Activated CD8-positive, alpha-beta memory T cell treated with anti-CD3 and anti-CD28 coated beads, Interleukin-2, amount 10 ng/mL, durations not matched to agents 7 days and 5 days (primary cell): ENCODE measurements at regions of chr1 and their contacts with region 1.

Region 1: GRCh38 chr1:113904674-113905434 is at the starts of genes AP4B1 and DCLRE1B:
- DNase-seq: peak; percentile 100
- ATAC-seq: peak; percentile 92
- H3K4me3 Mint-ChIP-seq: peak within 1 kb of the TSS; percentile 97
- H3K27ac Mint-ChIP-seq: peak within 1 kb of the TSS; percentile 89
- H3K4me1 Mint-ChIP-seq: peaks cover 60% of the 10 kb centered on the region
- H3K27me3 Mint-ChIP-seq: no peaks in the 10 kb centered on the region
- total RNA-seq, gene AP4B1: 57.3 to 61.8 TPM
- total RNA-seq, gene DCLRE1B: 19.5 to 21.1 TPM

Region 2: DNA sequence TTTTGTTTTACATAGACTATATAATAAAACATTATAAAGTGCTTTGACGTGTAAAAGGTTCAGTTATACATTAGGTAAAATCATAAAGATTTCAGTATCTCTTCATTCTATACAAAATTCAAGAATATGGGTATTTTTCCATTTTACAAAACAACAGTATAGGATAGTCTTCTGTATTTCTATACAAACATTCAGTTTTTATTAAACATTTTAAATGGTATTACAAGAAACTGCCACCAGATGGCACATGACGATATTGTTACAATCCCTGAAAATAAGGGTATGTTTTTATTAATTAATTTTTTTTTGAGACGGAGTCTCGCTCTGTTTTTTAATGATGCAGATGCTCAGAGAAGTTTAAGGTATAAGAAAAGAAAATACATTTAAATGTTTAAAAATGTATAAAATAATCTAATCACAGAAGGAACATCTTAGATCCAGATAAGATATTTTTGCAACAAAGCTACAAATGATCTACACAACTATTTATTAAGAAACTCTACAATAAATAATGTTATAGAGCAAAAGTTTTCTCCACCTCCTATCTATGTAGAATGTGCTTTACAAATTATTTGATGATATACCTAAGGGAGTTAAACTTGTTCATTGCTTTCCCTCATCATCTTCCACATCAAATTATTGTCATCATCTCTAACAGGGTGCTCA is 69.1 kb before region 1 on chr1:
- CTCF ChIA-PET with region 1: interaction called, 50 read pairs
- DNase-seq: no peak
- ATAC-seq: no peak
- H3K4me3 Mint-ChIP-seq: no peak overlapping the region
- H3K27ac Mint-ChIP-seq: peak overlapping the region; percentile 12
- H3K4me1 Mint-ChIP-seq: peaks cover 10% of the 10 kb centered on the region
- H3K27me3 Mint-ChIP-seq: no peaks in the 10 kb centered on the region

Region 3: DNA sequence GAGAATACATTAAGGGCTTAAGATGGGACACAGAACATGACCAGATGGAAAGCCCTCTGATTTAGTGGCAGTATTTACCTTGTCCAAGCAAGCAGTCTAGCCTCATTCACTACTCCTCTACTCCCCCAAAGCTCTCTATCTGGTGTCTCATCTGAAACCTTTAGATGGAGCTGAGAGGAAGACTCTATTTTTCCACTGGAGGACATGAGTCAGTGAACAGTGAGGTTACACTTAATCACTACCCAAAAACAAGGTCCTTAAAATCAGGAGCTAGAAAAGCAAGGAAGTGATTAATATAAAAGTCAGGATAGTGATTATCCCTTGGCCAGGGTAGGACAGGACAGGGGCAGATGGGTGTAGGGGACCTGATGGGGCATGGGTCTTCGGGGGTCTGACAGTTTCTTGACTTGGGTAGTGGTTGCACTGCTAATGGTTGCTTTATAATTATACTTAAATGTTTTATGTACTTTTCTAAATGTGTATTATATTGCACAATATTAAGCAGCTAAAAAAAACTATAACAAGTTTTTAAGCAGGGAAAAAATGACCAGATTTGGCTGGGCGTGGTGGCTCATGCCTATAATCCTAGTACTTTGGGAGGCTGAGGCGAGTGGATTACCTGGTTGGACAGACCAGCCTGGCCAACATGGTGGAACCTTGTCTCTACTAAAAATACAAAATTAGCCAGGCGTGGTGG is 36.3 kb before region 1 on chr1:
- CTCF ChIA-PET with region 1: interaction called, 35 read pairs
- DNase-seq: no peak
- ATAC-seq: peak; percentile 18
- H3K4me3 Mint-ChIP-seq: peak overlapping the region; percentile 86
- H3K27ac Mint-ChIP-seq: peak overlapping the region; percentile 99
- H3K4me1 Mint-ChIP-seq: peaks cover 57% of the 10 kb centered on the region
- H3K27me3 Mint-ChIP-seq: no peaks in the 10 kb centered on the region

Region 4: DNA sequence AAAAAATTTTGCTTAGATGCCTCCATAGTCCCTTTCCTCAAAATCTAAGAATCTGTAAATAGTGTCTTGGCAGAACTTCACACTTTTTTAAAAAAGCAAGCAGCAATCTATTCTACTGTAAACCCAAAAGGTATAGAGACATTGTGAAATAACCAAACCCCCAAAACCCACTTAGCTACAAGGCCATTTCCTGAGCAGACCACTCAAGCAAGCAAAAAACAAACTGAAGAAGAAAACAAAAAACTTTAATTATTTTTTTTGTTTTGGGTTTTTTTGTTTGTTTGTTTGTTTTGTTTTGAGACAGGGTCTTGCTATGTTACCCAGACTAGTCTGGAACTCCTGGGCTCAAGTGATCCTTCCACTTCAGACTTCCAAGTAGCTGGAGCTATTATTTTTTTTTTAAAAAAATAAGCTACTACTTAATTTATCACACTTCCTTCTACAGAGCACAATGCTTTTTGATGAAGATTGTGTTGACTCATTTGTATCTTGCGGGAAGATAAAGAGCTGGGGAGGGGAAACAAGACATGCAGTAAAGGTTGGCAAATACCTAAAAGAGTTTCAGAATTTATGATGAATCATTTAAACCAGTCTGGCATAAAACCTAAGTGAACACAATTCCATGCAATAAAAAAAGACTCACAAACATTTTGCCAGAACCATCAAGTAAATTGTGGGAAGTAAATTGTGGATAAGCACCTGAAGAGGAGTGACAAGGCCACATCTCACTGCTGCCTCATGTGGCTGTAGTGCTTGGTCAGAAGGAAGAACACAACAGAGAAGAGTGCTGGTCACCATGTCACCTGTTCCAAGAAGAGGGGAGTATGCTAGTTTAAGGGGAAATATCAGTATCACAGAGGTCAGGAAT is 30.6 kb before region 1 on chr1:
- CTCF ChIA-PET with region 1: interaction called, 35 read pairs
- DNase-seq: peak; percentile 66
- ATAC-seq: peak; percentile 46
- H3K4me3 Mint-ChIP-seq: peak overlapping the region; percentile 65
- H3K27ac Mint-ChIP-seq: peak overlapping the region; percentile 87
- H3K4me1 Mint-ChIP-seq: peaks cover 62% of the 10 kb centered on the region
- H3K27me3 Mint-ChIP-seq: no peaks in the 10 kb centered on the region

Region 5: GRCh38 chr1:113881661-113882060 is 23.2 kb before region 1 on chr1:
- CTCF ChIA-PET with region 1: interaction called, 11 read pairs
- DNase-seq: no peak
- ATAC-seq: no peak
- H3K4me3 Mint-ChIP-seq: no peak overlapping the region
- H3K27ac Mint-ChIP-seq: peak overlapping the region; percentile 14
- H3K4me1 Mint-ChIP-seq: peaks cover 42% of the 10 kb centered on the region
- H3K27me3 Mint-ChIP-seq: no peaks in the 10 kb centered on the region

Region 6: GRCh38 chr1:113963281-113963906 is 58.5 kb after region 1 on chr1:
- CTCF ChIA-PET with region 1: no interaction called
- DNase-seq: no peak
- ATAC-seq: no peak
- H3K4me3 Mint-ChIP-seq: no peak overlapping the region
- H3K27ac Mint-ChIP-seq: peak overlapping the region; percentile 47
- H3K4me1 Mint-ChIP-seq: no peaks in the 10 kb centered on the region
- H3K27me3 Mint-ChIP-seq: no peaks in the 10 kb centered on the region